Endothelial cell of umbilical vein (primary cell): ENCODE measurements at regions of chr19 and their contacts with region 1.

Region 1: DNA sequence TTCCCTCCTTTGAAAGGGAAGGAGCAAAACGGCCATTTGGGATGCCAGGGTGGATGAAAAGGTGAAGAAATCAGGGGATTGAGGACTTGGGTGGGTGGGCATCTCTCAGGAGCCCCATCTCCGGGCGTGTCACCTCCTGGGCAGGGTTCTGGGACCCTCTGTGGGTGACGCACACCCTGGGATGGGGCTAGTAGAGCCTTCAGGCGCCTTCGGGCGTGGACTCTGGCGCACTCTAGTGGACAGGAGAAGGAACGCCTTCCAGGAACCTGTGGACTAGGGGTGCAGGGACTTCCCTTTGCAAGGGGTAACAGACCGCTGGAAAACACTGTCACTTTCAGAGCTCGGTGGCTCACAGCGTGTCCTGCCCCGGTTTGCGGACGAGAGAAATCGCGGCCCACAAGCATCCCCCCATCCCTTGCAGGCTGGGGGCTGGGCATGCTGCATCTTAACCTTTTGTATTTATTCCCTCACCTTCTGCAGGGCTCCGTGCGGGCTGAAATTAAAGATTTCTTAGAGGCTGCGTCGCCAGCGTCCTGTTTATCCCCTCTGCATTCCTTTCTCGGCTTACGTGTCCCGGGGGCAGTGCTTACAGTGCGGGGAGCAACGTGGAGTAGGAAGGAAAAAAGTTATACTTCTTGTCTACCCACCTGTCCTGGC is 15.2 kb upstream of the S1PR4 start:
- DNase-seq: peak; percentile 54
- H3K4me3 ChIP-seq: no peak overlapping the region
- H3K27ac ChIP-seq: no peak overlapping the region
- H3K4me1 ChIP-seq: peaks cover 6% of the 10 kb centered on the region
- H3K27me3 ChIP-seq: no peaks in the 10 kb centered on the region
- CTCF ChIP-seq: peak; percentile 79 to 97
- POLR2A ChIP-seq: no peak

Region 2: GRCh38 chr19:3075895-3076431 is 87.4 kb before region 1 on chr19:
- CTCF ChIA-PET with region 1: interaction called, 3 read pairs
- POLR2A ChIA-PET with region 1: no interaction called
- dilution Hi-C with region 1: no loop called
- intact Hi-C with region 1: loop called (anchors 1 kb)
- DNase-seq: peak; percentile 49
- H3K4me3 ChIP-seq: no peak overlapping the region
- H3K27ac ChIP-seq: no peak overlapping the region
- H3K4me1 ChIP-seq: no peaks in the 10 kb centered on the region
- H3K27me3 ChIP-seq: no peaks in the 10 kb centered on the region
- CTCF ChIP-seq: peak; percentile 92 to 97
- POLR2A ChIP-seq: no peak

Region 3: DNA sequence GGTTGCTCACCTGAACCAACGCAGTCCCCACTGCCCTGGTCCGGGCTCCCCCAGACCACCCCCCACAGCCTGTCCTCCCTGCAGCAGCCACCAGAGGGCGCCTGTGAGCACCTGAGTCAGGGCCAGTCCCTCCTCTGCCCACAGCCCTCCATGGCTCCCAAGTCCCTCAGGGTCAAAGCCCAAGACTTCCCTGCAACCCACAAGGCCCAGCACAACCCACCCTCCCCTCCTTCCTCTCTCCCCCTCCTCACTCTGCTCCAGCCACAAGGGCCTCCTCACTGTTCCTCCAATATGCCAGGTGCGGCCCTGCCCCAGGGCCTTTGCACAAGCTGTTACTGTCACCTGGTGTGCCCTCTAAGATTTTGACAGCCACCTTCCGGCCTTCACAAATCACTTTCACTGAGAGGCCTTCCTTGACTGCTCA is 16.7 kb before region 1 on chr19:
- CTCF ChIA-PET with region 1: interaction called, 5 read pairs
- POLR2A ChIA-PET with region 1: no interaction called
- dilution Hi-C with region 1: no loop called
- intact Hi-C with region 1: loop called (anchors 1 kb)
- DNase-seq: no peak
- H3K4me3 ChIP-seq: no peak overlapping the region
- H3K27ac ChIP-seq: no peak overlapping the region
- H3K4me1 ChIP-seq: peaks cover 13% of the 10 kb centered on the region
- H3K27me3 ChIP-seq: no peaks in the 10 kb centered on the region
- CTCF ChIP-seq: peak; percentile 83 to 94
- POLR2A ChIP-seq: no peak

Region 4: GRCh38 chr19:3304871-3305423 is 141.6 kb after region 1 on chr19:
- CTCF ChIA-PET with region 1: no interaction called
- POLR2A ChIA-PET with region 1: no interaction called
- dilution Hi-C with region 1: no loop called
- intact Hi-C with region 1: no loop called
- DNase-seq: peak; percentile 71
- H3K4me3 ChIP-seq: no peak overlapping the region
- H3K27ac ChIP-seq: no peak overlapping the region
- H3K4me1 ChIP-seq: no peaks in the 10 kb centered on the region
- H3K27me3 ChIP-seq: no peaks in the 10 kb centered on the region
- CTCF ChIP-seq: peak; percentile 66 to 77
- POLR2A ChIP-seq: no peak